Sciatic nerve (tissue), 2 donors: ENCODE measurements at regions of chr12 and their contacts with region 1.

Region 1: GRCh38 chr12:120148011-120148410 is 31.5 kb upstream of the RAB35 start:
- DNase-seq: no peak
- ATAC-seq: no peak

Region 2: DNA sequence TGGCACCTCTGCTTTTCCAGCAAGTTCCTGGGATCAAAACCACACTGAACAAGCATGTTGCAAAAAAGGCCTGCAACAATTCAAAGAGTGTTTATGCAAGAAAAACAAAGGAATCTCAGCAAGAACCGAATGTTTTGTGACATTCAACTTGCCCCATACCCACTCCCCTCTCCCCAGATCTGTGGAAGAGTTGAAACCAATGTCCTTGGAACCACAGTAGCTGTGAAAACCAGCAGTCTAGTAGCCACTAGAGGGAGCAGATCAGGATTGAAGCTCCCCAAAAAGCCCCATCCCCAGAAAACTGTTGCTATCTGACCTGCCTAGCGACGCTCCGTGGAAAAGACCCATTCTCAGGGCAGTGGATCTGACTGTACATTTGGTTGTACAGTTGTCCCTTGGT is 453.0 kb before region 1 on chr12:
- intact Hi-C with region 1: no loop called
- DNase-seq: no peak
- ATAC-seq: no peak

Region 3: GRCh38 chr12:119925269-119925668 is 222.7 kb before region 1 on chr12:
- intact Hi-C with region 1: no loop called
- DNase-seq: no peak
- ATAC-seq: no peak

Region 4: DNA sequence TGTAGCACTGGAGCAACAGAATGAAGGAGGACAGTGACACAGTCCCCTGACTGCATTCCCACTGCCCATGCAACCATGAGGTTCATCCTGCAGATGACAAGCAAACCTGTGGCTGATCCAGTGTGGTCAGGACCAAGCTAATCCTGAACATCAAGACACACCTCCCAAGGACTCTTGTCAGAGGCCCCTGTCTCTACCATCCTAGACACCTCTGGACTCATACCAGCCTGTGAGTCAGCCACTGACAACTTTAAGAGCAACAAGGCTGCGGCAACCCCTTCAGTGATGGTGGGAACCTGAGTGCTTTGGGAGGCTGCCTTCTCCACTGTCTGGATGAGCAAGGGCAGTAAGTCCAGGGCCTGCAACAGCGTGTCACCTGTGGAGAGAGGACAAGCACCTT is 21.9 kb after region 1 on chr12:
- intact Hi-C with region 1: loop called (anchors 1 kb)
- DNase-seq: no peak
- ATAC-seq: no peak